IMR-90 (cell line): ENCODE measurements at regions of chr3 and their contacts with region 1.

Region 1: DNA sequence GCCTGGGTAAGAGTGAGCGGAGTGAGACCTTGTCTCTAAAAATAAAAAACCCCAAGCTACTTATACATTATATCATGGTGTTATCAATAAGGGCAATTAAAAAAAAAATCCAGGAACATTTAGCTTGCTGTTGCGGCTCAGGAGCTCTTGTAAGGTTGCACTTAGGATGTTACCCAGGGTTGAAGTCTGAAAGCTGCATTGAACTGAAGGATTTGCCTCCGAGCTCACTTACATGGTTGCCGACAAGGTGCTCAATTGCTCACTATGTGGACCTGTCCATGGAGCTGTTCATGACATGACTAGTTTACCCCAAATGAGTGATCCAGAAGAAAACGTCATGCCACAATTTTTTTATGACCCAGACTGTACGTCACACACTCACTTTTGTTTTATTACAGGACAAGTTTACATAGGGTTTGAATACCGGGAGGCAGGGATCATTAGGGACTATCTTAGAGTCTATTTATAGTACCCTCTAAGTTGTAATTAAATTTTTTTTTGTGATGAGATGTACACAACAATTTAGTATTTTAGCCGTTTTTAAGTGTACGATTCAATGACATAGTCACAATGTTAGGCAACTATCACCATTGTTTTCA is 21.0 kb upstream of the CLDN11 start:
- DNase-seq: no peak
- ATAC-seq: no peak
- H3K4me3 ChIP-seq: no peak overlapping the region
- H3K27ac ChIP-seq: no peak overlapping the region
- H3K4me1 ChIP-seq: no peaks in the 10 kb centered on the region
- H3K27me3 ChIP-seq: no peaks in the 10 kb centered on the region
- CTCF ChIP-seq: no peak
- POLR2A ChIP-seq: no peak
- RAD21 ChIP-seq: no peak

Region 2: GRCh38 chr3:170317954-170318353 is 79.7 kb before region 1 on chr3:
- CTCF ChIA-PET with region 1: no interaction called
- POLR2A ChIA-PET with region 1: no interaction called
- dilution Hi-C with region 1: no loop called
- in situ Hi-C with region 1: loop called (anchors 5 kb)
- intact Hi-C with region 1: no loop called
- DNase-seq: no peak
- ATAC-seq: no peak
- H3K4me3 ChIP-seq: no peak overlapping the region
- H3K27ac ChIP-seq: no peak overlapping the region
- H3K4me1 ChIP-seq: no peaks in the 10 kb centered on the region
- H3K27me3 ChIP-seq: no peaks in the 10 kb centered on the region
- CTCF ChIP-seq: no peak
- POLR2A ChIP-seq: no peak
- RAD21 ChIP-seq: no peak

Region 3: DNA sequence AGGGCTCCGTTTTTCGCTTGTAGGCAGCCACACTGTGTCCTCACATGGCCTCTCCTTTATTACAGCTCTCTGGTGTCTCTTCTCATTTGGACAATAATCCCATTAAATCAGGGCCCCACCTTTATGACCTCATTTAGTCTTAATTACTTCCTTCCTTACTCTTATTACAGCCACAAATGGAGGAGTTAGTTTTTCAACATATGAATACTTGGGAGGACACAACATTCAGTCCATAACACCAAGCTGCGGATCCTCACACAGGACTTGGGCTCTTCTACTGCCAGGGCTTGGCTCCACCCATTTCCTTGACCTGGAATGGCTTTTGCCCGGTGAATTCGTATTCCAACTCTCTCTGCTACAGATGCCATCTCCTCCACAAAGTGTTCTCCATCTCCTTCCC is 262.5 kb after region 1 on chr3:
- CTCF ChIA-PET with region 1: no interaction called
- POLR2A ChIA-PET with region 1: no interaction called
- dilution Hi-C with region 1: no loop called
- in situ Hi-C with region 1: no loop called
- intact Hi-C with region 1: no loop called
- DNase-seq: no peak
- ATAC-seq: no peak
- H3K4me3 ChIP-seq: no peak overlapping the region
- H3K27ac ChIP-seq: no peak overlapping the region
- H3K4me1 ChIP-seq: no peaks in the 10 kb centered on the region
- H3K27me3 ChIP-seq: no peaks in the 10 kb centered on the region
- CTCF ChIP-seq: no peak
- POLR2A ChIP-seq: no peak
- RAD21 ChIP-seq: no peak